ENCODE measurements at regions of chr1 and their contacts with region 1.

Region 1: DNA sequence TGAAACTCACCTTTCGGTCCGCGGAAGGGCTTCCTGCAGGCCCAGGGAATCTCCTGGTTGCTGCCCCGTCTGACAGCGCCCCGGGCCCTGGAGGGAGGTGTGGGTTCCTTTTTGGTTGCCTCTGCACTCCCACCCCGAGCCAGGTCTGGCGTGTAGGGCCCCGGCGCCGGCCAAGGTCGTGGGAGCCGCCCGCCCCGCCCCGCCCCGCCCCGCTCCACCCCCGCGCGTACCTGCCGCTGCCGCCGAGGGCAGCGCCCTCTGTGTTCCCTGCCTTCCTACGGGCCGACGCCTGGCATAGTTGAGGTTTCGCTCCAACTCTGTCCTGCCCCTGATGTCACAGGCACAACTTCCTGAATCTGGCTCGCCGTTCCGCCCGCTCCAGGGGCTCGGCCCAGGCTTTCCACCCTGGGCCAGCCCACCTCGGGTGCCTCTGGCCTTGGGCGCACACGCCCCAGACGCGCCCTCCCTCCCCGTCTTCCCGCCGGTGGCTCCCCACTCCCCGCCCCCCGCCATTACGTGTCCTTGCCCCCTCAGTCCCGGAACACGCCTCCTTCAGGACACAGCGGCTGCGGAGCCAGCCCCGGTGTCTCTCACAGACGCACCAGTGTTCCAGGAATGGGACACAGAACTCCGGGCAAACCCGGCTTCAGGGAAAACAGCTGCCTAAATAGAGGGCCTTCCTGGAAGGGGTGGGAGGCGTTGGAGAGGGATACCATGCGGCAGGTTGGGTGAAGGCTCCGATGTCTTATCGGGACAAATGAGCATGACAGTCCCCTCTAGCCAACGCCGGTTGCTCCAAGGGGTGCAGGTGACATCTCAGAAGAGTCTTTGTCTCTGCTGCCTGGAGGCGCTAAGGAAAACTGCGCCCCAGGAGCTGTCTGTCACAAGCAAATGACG is at the start of gene KIAA0040:
- DNase-seq: peak; percentile 87
- H3K4me3 Mint-ChIP-seq: peak within 1 kb of the TSS; percentile 80
- H3K27ac Mint-ChIP-seq: peak within 1 kb of the TSS; percentile 67
- H3K4me1 Mint-ChIP-seq: peaks cover 43% of the 10 kb centered on the region
- H3K27me3 Mint-ChIP-seq: no peaks in the 10 kb centered on the region
- CTCF ChIP-seq: no peak
- total RNA-seq, gene KIAA0040: 26.7 and 27.7 TPM in 2 replicates

Region 2: GRCh38 chr1:175174309-175175165 is 18.3 kb before region 1 on chr1:
- CTCF ChIA-PET with region 1: interaction called, 17 read pairs
- POLR2A ChIA-PET with region 1: interaction called, 32 read pairs
- intact Hi-C with region 1: no loop called
- DNase-seq: no peak
- H3K4me3 Mint-ChIP-seq: no peak overlapping the region
- H3K27ac Mint-ChIP-seq: peak overlapping the region; percentile 39
- H3K4me1 Mint-ChIP-seq: peaks cover 24% of the 10 kb centered on the region
- H3K27me3 Mint-ChIP-seq: no peaks in the 10 kb centered on the region
- CTCF ChIP-seq: no peak

Region 3: GRCh38 chr1:175179845-175180590 is 12.9 kb before region 1 on chr1:
- CTCF ChIA-PET with region 1: interaction called, 17 read pairs
- POLR2A ChIA-PET with region 1: interaction called, 32 read pairs
- intact Hi-C with region 1: no loop called
- DNase-seq: peak; percentile 25
- H3K4me3 Mint-ChIP-seq: no peak overlapping the region
- H3K27ac Mint-ChIP-seq: no peak overlapping the region
- H3K4me1 Mint-ChIP-seq: peaks cover 8% of the 10 kb centered on the region
- H3K27me3 Mint-ChIP-seq: no peaks in the 10 kb centered on the region
- CTCF ChIP-seq: no peak

Region 4: GRCh38 chr1:175208773-175209492 is 16.1 kb after region 1 on chr1:
- CTCF ChIA-PET with region 1: interaction called, 11 read pairs
- POLR2A ChIA-PET with region 1: interaction called, 20 read pairs
- intact Hi-C with region 1: no loop called
- DNase-seq: no peak
- H3K4me3 Mint-ChIP-seq: no peak overlapping the region
- H3K27ac Mint-ChIP-seq: no peak overlapping the region
- H3K4me1 Mint-ChIP-seq: peaks cover 14% of the 10 kb centered on the region
- H3K27me3 Mint-ChIP-seq: no peaks in the 10 kb centered on the region
- CTCF ChIP-seq: no peak

Region 5: DNA sequence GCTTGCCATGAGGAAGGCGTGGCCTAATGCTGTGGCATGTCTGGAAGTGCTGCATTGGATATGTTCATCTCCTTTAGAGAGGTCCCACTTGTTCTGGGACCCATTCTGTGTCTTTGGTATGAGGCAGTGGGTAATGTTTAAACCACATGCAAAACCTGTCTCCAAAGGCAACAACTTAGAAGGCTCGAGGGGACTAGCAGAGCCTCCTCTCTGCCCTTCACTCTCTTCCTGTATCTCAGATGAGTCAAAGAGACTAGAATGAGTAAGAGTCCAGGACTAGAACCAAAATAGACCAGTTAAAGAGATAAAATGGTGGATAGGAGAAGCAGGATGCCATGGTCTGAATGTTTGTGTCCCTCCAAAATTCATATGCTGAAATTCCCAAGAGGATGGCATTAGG is 220.5 kb after region 1 on chr1:
- CTCF ChIA-PET with region 1: no interaction called
- POLR2A ChIA-PET with region 1: no interaction called
- intact Hi-C with region 1: no loop called
- DNase-seq: no peak
- H3K4me3 Mint-ChIP-seq: no peak overlapping the region
- H3K27ac Mint-ChIP-seq: no peak overlapping the region
- H3K4me1 Mint-ChIP-seq: no peaks in the 10 kb centered on the region
- H3K27me3 Mint-ChIP-seq: peaks cover 62% of the 10 kb centered on the region
- CTCF ChIP-seq: no peak